ENCODE measurements at regions of chr2 and their contacts with region 1.

Region 1: GRCh38 chr2:203280428-203281064 is 41.7 kb downstream of the CYP20A1 start:
- DNase-seq: no peak
- H3K4me3 ChIP-seq: no peak overlapping the region
- H3K4me3 Mint-ChIP-seq: no peak overlapping the region
- H3K27ac ChIP-seq: no peak overlapping the region
- H3K27ac Mint-ChIP-seq: no peak overlapping the region
- H3K4me1 ChIP-seq: no peaks in the 10 kb centered on the region
- H3K4me1 Mint-ChIP-seq: no peaks in the 10 kb centered on the region
- H3K27me3 ChIP-seq: no peaks in the 10 kb centered on the region
- H3K27me3 Mint-ChIP-seq: peaks cover 0 to 2% of the 10 kb centered on the region in 2 donors

Region 2: DNA sequence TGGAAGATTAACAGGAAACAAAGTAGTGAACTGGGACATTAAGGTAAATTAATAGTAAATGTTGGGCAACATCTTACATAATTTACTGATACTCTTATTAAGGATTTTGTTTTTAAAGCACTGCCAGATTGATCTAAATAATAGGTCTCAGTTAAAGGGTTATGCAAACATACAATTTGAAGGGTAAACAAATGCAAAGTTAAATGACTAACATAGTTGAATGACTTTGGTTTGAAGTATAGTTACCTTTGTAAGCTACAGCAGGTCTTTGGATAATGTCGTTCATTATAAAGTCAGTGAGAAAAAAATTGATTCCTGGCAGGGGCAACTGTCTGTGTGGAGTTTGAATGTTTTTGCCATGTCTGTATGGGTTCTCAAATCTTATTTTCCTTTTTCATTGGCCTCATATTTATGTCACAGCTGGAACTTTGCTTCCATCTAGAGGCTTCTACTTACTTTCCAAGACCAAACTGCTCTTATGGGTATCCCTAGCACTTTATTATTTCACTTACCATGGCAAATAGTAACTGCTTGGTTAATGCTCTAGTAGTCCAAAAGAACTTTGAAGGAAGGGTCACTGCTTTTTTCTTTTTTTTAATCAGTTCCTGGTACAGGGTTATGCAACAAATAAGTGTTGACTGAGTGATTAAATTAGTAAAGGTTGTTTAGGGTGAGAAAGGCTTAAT is 158.1 kb before region 1 on chr2:
- CTCF ChIA-PET with region 1: no interaction called
- POLR2A ChIA-PET with region 1: no interaction called
- DNase-seq: no peak
- H3K4me3 ChIP-seq: no peak overlapping the region
- H3K4me3 Mint-ChIP-seq: no peak overlapping the region
- H3K27ac ChIP-seq: no peak overlapping the region
- H3K27ac Mint-ChIP-seq: peak overlapping the region in 2 of 8 donors; percentile 6 to 29
- H3K4me1 ChIP-seq: no peaks in the 10 kb centered on the region
- H3K4me1 Mint-ChIP-seq: no peaks in the 10 kb centered on the region
- H3K27me3 ChIP-seq: no peaks in the 10 kb centered on the region
- H3K27me3 Mint-ChIP-seq: no peaks in the 10 kb centered on the region

Region 3: DNA sequence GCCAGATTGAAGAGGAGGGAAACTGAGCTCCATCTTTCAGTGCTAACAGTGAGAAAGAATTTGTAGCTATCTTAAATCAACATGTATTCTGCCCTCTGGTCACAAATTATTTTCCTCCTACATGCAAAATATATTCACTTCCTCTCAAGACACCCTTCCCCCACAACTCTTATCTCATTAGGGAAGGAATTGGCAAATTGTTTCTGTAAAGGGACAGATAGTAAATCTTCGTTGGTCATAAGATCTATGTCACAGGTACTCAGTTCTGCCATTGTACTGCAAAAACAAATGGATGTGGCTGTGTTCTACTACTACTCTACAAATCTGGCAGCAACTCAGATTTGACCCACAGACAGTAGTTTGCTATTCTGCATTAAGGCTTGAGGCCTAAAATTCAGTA is 94.7 kb before region 1 on chr2:
- CTCF ChIA-PET with region 1: no interaction called
- POLR2A ChIA-PET with region 1: interaction called, 18 read pairs
- DNase-seq: no peak
- H3K4me3 ChIP-seq: no peak overlapping the region
- H3K4me3 Mint-ChIP-seq: no peak overlapping the region
- H3K27ac ChIP-seq: no peak overlapping the region
- H3K27ac Mint-ChIP-seq: no peak overlapping the region
- H3K4me1 ChIP-seq: no peaks in the 10 kb centered on the region
- H3K4me1 Mint-ChIP-seq: no peaks in the 10 kb centered on the region
- H3K27me3 ChIP-seq: no peaks in the 10 kb centered on the region
- H3K27me3 Mint-ChIP-seq: no peaks in the 10 kb centered on the region

Region 4: GRCh38 chr2:203310688-203311448 is 30.3 kb after region 1 on chr2:
- CTCF ChIA-PET with region 1: no interaction called
- POLR2A ChIA-PET with region 1: no interaction called
- DNase-seq: no peak
- H3K4me3 ChIP-seq: no peak overlapping the region
- H3K4me3 Mint-ChIP-seq: no peak overlapping the region
- H3K27ac ChIP-seq: no peak overlapping the region
- H3K27ac Mint-ChIP-seq: no peak overlapping the region
- H3K4me1 ChIP-seq: no peaks in the 10 kb centered on the region
- H3K4me1 Mint-ChIP-seq: peaks cover 0 to 4% (median 1%) of the 10 kb centered on the region in 3 donors
- H3K27me3 ChIP-seq: no peaks in the 10 kb centered on the region
- H3K27me3 Mint-ChIP-seq: no peaks in the 10 kb centered on the region

Measured in CD8-positive, alpha-beta memory T cell (primary cell).